ENCODE measurements at regions of chr6 and their contacts with region 1.

Region 1: GRCh38 chr6:41591859-41592502 is 45.8 kb downstream of the FOXP4 start:
- DNase-seq: peak in 2 of 3 donors; percentile 83 to 84
- ATAC-seq: peak; percentile 83
- H3K4me3 ChIP-seq: no peak overlapping the region
- H3K4me1 ChIP-seq: no peaks in the 10 kb centered on the region
- CTCF ChIP-seq: peak; percentile 91

Region 2: GRCh38 chr6:41367700-41368099 is 224.3 kb before region 1 on chr6:
- intact Hi-C with region 1: loop called (anchors 5 to 10 kb)
- DNase-seq: peak in 2 of 3 donors; percentile 55 to 64
- ATAC-seq: peak; percentile 56
- H3K4me3 ChIP-seq: no peak overlapping the region
- H3K4me1 ChIP-seq: peaks cover 18% of the 10 kb centered on the region
- CTCF ChIP-seq: peak; percentile 18

Region 3: DNA sequence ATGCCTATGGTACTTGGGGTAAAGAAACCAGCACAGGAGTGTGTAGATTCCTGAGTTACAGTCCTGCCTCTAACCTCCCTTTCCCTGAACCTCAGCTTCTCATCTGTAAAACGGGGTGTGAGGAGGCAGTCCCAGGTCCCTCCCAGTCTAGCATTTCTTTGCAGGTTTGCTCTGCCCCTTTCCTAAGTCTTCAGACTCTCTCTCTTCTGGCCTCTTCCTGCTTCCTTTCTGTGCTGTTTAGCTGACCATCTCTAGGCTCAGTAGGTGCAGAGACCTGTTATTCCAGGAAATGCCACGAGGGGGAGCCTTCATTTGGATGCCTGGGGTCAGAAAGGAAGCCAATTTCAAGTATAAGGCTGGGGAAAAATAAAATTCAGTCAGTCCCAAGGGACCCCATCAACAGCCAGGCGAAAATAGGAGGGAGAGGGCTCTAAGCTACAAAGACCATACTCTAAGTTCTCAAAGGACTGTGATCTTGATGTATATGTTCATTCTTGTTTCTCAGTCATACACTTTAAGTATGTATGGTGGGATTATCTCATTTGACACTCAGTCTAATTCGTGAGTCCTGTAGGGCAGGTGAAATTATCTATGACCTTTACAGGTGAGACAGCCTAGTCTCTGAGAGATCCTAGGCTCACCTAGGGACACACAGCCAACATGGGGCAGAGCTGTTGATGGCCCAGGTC is 167.5 kb before region 1 on chr6:
- intact Hi-C with region 1: loop called (anchors 2 to 5 kb)
- DNase-seq: peak in 2 of 3 donors; percentile 78 to 97
- ATAC-seq: peak; percentile 58
- H3K4me3 ChIP-seq: no peak overlapping the region
- H3K4me1 ChIP-seq: peaks cover 9% of the 10 kb centered on the region
- CTCF ChIP-seq: peak; percentile 73

Region 4: DNA sequence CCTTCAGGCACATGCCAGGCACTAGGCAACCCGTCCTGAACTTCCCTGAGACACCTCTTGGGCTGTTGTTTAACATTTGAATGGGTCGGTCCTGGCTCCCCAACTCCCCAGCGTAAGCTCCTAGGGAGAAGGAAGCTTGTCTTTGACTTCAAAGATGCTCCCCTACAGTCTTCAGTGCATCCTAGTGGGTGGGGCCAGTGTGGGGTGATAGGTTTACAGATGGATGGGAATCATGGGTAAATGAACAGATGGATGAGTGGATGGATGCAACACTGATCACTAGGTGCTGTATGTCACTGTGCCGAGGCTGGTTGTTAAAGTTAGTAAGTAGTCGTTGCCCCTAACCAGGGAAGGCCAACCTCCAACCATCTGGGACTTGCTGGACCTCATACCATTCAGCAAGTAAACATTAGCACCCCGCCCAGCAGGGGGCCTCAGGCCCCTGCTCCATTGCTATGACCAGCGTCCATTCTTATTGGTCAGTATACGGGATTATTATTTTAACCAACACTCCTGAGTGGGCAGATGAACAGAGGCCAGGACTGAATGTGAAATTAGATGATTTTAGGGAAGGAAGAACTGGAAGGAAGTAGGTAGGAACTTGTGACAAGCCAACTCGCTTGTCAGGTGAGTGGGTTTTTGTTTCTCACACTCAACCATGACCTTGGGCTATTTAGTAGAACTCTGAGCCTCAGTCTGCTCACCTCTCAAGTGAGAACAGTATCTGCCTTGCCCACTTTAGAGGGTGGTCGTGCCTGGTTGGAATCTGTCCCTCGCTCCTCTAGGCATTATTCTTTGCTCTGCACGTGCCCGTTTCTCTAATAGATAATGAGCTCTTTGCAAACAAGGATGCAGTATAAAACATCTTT is 128.7 kb before region 1 on chr6:
- intact Hi-C with region 1: loop called (anchors 5 to 10 kb)
- DNase-seq: peak in 2 of 3 donors; percentile 75 to 84
- ATAC-seq: peak; percentile 74
- H3K4me3 ChIP-seq: no peak overlapping the region
- H3K4me1 ChIP-seq: no peaks in the 10 kb centered on the region
- CTCF ChIP-seq: peak; percentile 20

Measured in mucosa of descending colon (tissue), 3 donors.